ENCODE measurements at regions of chr19 and their contacts with region 1.

Region 1: GRCh38 chr19:48588670-48589399 is 17.7 kb upstream of the SPACA4 start:
- DNase-seq: peak; percentile 89 to 93
- H3K4me3 ChIP-seq: peak overlapping the region; percentile 27
- H3K4me3 Mint-ChIP-seq: peak overlapping the region; percentile 79
- H3K27ac Mint-ChIP-seq: peak overlapping the region; percentile 74
- H3K4me1 ChIP-seq: peaks cover 3% of the 10 kb centered on the region
- H3K4me1 Mint-ChIP-seq: peaks cover 14% of the 10 kb centered on the region
- H3K27me3 ChIP-seq: no peaks in the 10 kb centered on the region
- H3K27me3 Mint-ChIP-seq: no peaks in the 10 kb centered on the region
- CTCF ChIP-seq: peak; percentile 95 to 97

Region 2: DNA sequence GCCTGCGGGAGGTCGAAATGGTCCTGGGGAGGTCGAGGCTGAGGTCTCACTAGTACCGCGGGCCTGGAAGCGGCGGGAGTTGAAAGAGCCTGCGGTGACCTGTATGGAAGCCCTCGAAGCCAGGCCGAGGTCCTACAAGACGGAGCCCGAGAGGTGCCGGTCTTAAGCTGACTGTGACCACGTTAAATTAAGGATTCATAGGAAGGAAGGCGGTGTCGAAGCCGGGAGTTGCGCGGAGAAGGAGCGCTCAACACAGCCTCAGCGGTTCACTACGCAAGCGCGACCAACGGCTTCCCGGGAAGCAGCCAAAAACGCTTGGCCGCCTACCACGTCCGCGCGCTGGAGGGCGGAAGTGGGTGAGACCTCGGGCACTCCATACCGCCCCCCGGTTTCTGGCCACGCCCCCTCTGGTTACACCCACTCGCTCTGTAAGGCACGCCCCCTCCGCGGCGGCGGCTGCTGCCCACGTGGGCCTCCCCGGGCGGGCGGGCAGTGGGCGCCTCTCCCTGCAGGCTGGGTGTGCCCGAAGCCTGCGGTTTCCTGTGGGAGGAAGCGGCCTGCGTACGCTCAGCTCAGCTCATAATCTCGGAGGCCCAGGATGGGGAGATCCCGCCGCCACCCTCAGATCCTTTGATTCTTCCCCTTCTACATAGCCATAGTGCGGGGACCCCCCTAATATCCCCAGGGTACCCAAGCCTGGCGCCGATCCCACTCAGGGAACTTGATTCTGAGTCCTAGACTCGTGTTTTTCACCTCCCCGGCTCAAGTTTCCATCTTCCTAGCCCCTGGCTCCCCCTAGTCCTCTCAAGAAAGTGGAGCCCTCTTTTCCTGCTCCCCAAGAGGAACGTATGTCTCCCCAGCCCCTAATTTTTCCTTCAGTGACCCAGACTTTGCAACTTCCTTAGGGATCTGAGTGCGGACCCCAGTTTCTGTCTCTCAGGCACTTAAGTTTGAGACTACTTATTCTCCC is 266.9 kb before region 1 on chr19:
- CTCF ChIA-PET with region 1: interaction called, 10 read pairs
- POLR2A ChIA-PET with region 1: no interaction called
- intact Hi-C with region 1: no loop called
- DNase-seq: peak; percentile 98 to 99
- H3K4me3 ChIP-seq: peak overlapping the region; percentile 93
- H3K4me3 Mint-ChIP-seq: peak overlapping the region; percentile 96
- H3K27ac Mint-ChIP-seq: peak overlapping the region; percentile 95
- H3K4me1 ChIP-seq: peaks cover 25% of the 10 kb centered on the region
- H3K4me1 Mint-ChIP-seq: peaks cover 34% of the 10 kb centered on the region
- H3K27me3 ChIP-seq: no peaks in the 10 kb centered on the region
- H3K27me3 Mint-ChIP-seq: no peaks in the 10 kb centered on the region
- CTCF ChIP-seq: peak in 1 of 2 experiments; percentile 15

Region 3: DNA sequence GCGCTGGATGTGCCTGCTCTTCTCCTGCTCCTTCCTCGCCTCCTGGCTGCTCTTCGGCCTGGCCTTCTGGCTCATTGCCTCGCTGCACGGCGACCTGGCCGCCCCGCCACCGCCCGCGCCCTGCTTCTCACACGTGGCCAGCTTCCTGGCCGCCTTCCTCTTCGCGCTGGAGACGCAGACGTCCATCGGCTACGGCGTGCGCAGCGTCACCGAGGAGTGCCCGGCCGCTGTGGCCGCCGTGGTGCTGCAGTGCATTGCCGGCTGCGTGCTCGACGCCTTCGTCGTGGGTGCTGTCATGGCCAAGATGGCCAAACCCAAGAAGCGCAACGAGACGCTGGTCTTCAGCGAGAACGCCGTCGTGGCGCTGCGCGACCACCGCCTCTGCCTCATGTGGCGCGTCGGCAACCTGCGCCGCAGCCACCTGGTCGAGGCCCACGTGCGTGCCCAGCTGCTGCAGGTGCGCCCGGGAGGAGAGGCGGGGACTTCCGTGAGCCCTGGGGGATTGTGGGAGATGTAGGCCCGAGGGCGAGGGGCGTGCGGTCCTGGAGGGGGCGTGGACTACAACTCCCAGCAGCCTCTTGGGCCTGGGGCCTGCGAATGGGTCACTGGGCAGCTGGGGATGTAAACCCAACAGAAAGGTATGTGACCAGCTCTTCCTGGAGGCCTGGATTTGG is 126.7 kb before region 1 on chr19:
- CTCF ChIA-PET with region 1: no interaction called
- POLR2A ChIA-PET with region 1: no interaction called
- intact Hi-C with region 1: no loop called
- DNase-seq: peak; percentile 61 to 69
- H3K4me3 ChIP-seq: no peak overlapping the region
- H3K4me3 Mint-ChIP-seq: no peak overlapping the region
- H3K27ac Mint-ChIP-seq: no peak overlapping the region
- H3K4me1 ChIP-seq: no peaks in the 10 kb centered on the region
- H3K4me1 Mint-ChIP-seq: no peaks in the 10 kb centered on the region
- H3K27me3 ChIP-seq: no peaks in the 10 kb centered on the region
- H3K27me3 Mint-ChIP-seq: no peaks in the 10 kb centered on the region
- CTCF ChIP-seq: no peak

Region 4: DNA sequence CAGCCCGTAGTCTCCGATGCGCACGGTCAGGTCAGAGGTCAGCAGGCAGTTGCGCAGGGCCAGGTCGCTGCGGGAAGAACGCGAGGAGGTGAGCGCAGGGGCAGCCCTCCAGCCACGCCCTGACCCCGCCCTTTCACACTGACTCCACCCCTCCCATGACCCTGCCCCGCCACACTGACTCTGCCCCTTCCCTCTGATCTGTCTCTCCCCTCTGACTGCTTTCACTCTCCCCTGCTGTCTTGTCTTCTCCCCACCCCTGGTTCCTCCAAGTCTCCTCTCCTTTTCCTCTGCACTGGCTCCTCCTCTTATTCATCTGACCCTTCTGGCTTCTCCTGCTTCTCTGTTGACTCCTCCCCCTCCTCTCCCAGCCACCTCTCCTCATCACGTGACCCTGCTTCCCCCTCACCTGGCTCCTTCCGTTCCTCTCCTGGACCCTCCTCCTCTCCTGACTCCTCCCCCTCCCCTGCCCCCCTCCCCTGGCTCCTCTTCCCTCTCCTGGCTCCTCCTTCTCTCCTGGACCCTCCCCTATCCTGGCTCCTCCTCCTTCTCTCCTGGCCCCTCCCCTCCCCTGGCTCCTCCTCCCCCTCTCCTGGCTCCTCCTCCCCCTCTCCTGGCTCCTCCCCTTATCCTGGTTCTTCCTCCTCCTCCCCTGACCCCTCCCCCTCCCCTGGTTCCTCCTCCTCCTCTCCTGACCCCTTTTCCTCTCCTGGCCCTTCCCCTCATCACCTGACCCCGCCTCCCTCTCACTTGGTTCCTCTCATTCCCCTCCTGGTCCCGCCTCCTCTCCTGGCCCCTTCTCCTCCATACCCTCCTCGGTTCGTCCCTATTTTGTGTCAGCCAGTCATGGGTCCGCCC is 87.1 kb before region 1 on chr19:
- CTCF ChIA-PET with region 1: interaction called, 112 read pairs
- POLR2A ChIA-PET with region 1: interaction called, 10 read pairs
- intact Hi-C with region 1: loop called (anchors 1 kb)
- DNase-seq: peak; percentile 99 to 100
- H3K4me3 ChIP-seq: peak overlapping the region; percentile 57
- H3K4me3 Mint-ChIP-seq: peak overlapping the region; percentile 80
- H3K27ac Mint-ChIP-seq: peak overlapping the region; percentile 87
- H3K4me1 ChIP-seq: peaks cover 15% of the 10 kb centered on the region
- H3K4me1 Mint-ChIP-seq: peaks cover 22% of the 10 kb centered on the region
- H3K27me3 ChIP-seq: no peaks in the 10 kb centered on the region
- H3K27me3 Mint-ChIP-seq: no peaks in the 10 kb centered on the region
- CTCF ChIP-seq: no peak

Region 5: DNA sequence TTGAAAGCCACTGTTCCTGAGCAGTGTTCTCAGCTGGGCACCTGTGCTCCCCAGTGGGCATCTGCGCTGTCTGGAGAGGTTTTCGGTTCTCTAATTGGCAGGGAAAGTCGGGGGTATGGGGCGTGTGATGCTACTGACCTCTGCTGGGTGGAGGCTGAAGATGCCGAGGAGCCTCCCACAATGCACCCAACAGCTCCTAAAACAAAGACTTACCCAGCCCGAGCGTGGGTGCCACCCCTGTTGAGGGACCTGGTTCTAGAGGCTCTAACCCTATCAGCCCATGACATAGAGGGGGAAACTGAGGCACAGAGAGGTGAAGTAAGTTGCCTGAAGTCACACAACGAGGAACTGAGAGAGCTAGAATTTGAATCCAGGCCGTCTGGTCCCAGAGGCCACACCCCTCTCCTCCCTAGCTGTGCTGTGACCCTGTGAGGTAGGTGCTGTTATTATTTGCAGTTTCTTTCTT is 20.0 kb after region 1 on chr19:
- CTCF ChIA-PET with region 1: interaction called, 13 read pairs
- POLR2A ChIA-PET with region 1: no interaction called
- intact Hi-C with region 1: loop called (anchors 1 kb)
- DNase-seq: peak in 1 of 2 experiments; percentile 70
- H3K4me3 ChIP-seq: no peak overlapping the region
- H3K4me3 Mint-ChIP-seq: peak overlapping the region; percentile 54
- H3K27ac Mint-ChIP-seq: no peak overlapping the region
- H3K4me1 ChIP-seq: no peaks in the 10 kb centered on the region
- H3K4me1 Mint-ChIP-seq: peaks cover 7% of the 10 kb centered on the region
- H3K27me3 ChIP-seq: no peaks in the 10 kb centered on the region
- H3K27me3 Mint-ChIP-seq: no peaks in the 10 kb centered on the region
- CTCF ChIP-seq: peak; percentile 82 to 86

Region 6: GRCh38 chr19:48770260-48770659 is 181.4 kb after region 1 on chr19:
- CTCF ChIA-PET with region 1: no interaction called
- POLR2A ChIA-PET with region 1: no interaction called
- intact Hi-C with region 1: no loop called
- DNase-seq: no peak
- H3K4me3 ChIP-seq: no peak overlapping the region
- H3K4me3 Mint-ChIP-seq: no peak overlapping the region
- H3K27ac Mint-ChIP-seq: no peak overlapping the region
- H3K4me1 ChIP-seq: peaks cover 4% of the 10 kb centered on the region; the same call in 1 of the 2 replicates
- H3K4me1 Mint-ChIP-seq: no peaks in the 10 kb centered on the region
- H3K27me3 ChIP-seq: no peaks in the 10 kb centered on the region
- H3K27me3 Mint-ChIP-seq: no peaks in the 10 kb centered on the region
- CTCF ChIP-seq: no peak

Measured in Caco-2 (cell line).